ENCODE measurements at regions of chr3 and their contacts with region 1.

Region 1: DNA sequence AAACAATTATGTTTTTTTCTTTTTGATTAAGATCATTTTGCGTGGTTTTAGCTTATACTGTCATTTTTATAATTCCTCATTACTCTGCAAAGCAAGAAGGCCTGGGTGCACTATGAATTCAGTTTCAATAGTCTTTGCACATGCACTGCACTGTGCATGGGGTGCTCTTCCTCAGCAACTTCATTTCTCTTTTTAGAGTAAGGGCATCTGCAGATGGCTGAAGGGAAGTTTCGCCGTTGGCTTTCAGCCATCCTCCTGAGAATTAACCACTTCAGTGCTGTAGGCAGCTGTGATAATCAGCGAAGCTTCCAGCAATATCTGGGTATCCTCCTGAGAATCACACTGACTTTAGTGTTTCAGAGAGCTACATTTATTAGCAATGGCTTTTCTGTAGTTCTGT is 284.8 kb downstream of the GBE1 start:
- DNase-seq: no peak
- ATAC-seq: no peak
- H3K4me3 ChIP-seq: no peak overlapping the region
- H3K27ac ChIP-seq: no peak overlapping the region
- H3K4me1 ChIP-seq: no peaks in the 10 kb centered on the region
- CTCF ChIP-seq: no peak
- EP300 ChIP-seq: no peak
- POLR2A ChIP-seq: no peak
- RAD21 ChIP-seq: no peak

Region 2: GRCh38 chr3:81443958-81444357 is 32.7 kb before region 1 on chr3:
- CTCF ChIA-PET with region 1: no interaction called
- POLR2A ChIA-PET with region 1: no interaction called
- DNase-seq: peak; percentile 11 to 64
- ATAC-seq: peak; percentile 78 to 87
- H3K4me3 ChIP-seq: no peak overlapping the region
- H3K27ac ChIP-seq: peak overlapping the region; percentile 65 to 70
- H3K4me1 ChIP-seq: peaks cover 24% of the 10 kb centered on the region
- CTCF ChIP-seq: no peak
- EP300 ChIP-seq: peak in 1 of 2 experiments; percentile 15; a peak in 2 of 5 replicates
- POLR2A ChIP-seq: no peak
- RAD21 ChIP-seq: no peak; a peak in 1 of 5 replicates

Region 3: GRCh38 chr3:81490541-81491288 is 14.0 kb after region 1 on chr3:
- CTCF ChIA-PET with region 1: interaction called, 13 read pairs
- POLR2A ChIA-PET with region 1: no interaction called
- DNase-seq: peak; percentile 39 to 88
- ATAC-seq: peak; percentile 98 to 99
- H3K4me3 ChIP-seq: no peak overlapping the region
- H3K27ac ChIP-seq: no peak overlapping the region
- H3K4me1 ChIP-seq: 0 out of 3 replicates have a peak, but pooled peaks cover 4% of the 10 kb centered on the region
- CTCF ChIP-seq: peak; percentile 57
- EP300 ChIP-seq: no peak
- POLR2A ChIP-seq: no peak
- RAD21 ChIP-seq: peak; percentile 65 to 68

Region 4: GRCh38 chr3:81643721-81644120 is 167.0 kb after region 1 on chr3:
- CTCF ChIA-PET with region 1: no interaction called
- POLR2A ChIA-PET with region 1: no interaction called
- DNase-seq: peak in 1 of 2 experiments; percentile 25
- ATAC-seq: peak; percentile 78; a peak in 5 of 6 replicates
- H3K4me3 ChIP-seq: no peak overlapping the region
- H3K27ac ChIP-seq: no peak overlapping the region
- H3K4me1 ChIP-seq: no peaks in the 10 kb centered on the region; the same call in 2 of the 3 replicates
- CTCF ChIP-seq: peak; percentile 31
- EP300 ChIP-seq: no peak
- POLR2A ChIP-seq: no peak
- RAD21 ChIP-seq: peak; percentile 49 to 62

Region 5: DNA sequence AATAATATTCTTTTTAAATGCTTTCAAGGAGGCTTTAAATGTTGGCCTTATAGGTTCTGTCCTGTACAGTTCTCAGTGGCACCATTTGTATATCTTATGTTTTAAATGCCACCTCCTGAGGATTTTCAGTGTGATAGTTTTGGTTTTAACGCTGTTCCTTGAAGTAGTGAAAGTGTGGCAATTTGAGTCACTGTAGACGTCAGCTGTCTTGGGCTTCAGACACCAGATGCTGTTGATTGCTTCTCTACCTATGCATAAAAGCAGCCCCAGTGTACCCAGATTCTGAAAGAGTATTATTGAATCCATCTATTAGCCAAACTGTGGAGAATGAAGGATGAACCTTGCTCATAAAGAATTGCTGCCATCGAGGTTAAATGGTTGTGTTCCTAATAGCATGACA is 601.6 kb after region 1 on chr3:
- CTCF ChIA-PET with region 1: no interaction called
- POLR2A ChIA-PET with region 1: no interaction called
- DNase-seq: no peak
- ATAC-seq: no peak
- H3K4me3 ChIP-seq: no peak overlapping the region
- H3K27ac ChIP-seq: no peak overlapping the region
- H3K4me1 ChIP-seq: no peaks in the 10 kb centered on the region
- CTCF ChIP-seq: no peak
- EP300 ChIP-seq: no peak
- POLR2A ChIP-seq: no peak
- RAD21 ChIP-seq: no peak

Measured in A549 (cell line).